ENCODE measurements at regions of chr10 and their contacts with region 1.

Region 1: DNA sequence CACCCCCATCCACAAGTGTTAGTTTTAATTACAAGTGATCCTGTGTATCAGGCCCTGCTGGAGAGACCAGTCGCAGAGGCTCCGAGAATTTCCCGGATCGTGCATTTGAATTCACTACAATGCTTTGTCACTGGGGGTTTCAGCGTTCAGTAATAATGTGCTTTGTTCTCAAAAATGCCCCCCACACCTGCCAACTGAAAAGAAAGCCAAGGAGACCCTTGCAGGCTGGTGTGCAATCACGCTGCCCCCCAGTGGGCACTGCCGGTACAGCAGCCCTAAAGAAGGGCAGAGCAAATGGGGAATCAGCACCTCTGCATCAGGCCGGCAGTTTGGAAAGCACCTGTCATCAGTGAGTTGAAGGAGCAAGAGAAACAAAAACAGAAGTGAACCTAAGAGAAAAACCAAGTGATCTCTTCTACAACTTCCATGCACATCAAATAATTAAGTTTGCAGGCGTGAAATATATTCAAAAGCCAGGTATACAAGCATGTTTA is 177.6 kb downstream of the PARD3 start:
- DNase-seq: peak; percentile 43

Region 2: DNA sequence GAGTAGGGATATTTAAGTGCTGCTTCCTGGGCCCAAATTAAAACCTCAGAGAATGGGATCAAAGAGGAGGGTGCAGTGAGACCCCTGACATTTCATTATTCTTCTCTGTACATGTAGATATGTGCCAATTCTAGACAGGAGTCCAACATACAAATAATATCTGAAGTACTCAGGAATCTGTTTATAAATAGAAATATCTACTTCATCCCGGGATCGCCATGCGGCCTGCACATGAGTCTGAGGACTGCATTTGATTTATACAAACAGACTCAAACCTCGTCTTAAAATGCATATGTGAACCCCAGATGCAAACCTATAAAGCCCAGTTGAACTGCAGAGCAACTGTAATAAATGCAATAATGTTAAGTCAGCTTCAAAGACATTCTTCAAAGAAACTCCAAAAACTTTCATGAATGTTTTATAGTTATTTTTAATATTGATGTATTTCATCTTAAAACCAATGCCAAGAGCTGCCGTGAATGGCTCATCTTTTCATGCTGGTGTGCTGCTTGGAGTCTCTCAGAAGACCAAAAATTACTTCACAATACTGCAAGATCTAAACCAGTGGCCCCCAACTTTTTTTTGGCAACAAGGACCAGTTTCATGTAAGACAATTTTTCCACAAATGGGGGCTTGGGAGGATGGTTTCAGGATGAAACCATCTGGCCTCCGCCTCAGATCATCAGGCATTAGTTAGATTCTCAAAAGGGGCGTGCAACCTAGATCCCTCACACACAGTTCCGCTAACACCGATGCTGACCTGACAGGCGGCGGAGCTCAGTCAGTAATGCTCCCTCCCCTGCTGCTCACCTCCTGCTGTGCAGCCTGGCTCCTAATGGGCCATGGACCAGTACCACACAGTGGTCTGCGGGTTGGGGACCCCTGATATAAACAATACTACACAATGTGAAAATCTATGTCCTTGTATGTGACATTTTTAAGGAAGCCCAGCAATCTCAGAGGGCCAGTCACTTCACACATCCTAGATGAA is 10.7 kb after region 1 on chr10:
- CTCF ChIA-PET with region 1: interaction called, 10 read pairs
- POLR2A ChIA-PET with region 1: no interaction called
- DNase-seq: no peak

Region 3: DNA sequence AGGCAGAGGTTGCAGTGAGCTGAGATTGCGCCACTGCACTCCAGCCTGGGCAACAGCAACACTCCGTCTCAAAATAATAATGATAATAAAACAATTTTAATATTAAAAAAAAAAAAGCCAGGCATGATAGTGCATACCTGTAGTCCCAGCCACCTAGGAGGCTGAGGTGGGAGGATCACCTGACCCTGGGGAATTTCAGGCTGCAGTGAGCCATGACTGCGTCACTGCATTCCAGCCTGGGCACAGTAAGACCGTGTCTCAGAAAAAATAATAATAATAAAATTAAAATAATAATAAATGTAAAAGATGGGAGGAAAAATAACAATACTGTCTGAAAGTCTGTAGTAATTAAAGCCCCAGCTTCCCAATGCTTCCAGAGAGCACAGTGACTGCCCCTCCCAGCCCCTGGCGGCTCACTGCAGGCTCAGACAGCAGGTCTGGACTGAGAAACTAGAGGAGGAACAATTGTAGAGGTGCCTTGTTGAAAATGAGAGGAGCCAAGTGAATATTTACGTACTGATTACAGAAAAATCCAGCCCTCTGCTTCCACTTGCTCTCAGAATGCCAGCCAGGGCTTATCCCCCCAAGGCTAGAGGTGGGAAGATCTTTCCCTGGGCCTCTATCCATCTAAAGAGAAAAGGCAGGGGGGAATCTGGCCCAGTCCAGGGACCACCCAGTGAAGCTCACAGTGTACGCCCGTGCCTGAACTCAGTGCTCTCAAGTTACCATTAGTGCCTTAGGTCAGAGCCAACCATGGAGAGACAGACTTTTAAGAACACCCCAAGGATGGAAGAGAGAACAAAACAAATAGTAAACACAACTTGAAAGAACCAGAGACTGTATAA is 64.8 kb after region 1 on chr10:
- CTCF ChIA-PET with region 1: no interaction called
- POLR2A ChIA-PET with region 1: no interaction called
- DNase-seq: no peak

Region 4: DNA sequence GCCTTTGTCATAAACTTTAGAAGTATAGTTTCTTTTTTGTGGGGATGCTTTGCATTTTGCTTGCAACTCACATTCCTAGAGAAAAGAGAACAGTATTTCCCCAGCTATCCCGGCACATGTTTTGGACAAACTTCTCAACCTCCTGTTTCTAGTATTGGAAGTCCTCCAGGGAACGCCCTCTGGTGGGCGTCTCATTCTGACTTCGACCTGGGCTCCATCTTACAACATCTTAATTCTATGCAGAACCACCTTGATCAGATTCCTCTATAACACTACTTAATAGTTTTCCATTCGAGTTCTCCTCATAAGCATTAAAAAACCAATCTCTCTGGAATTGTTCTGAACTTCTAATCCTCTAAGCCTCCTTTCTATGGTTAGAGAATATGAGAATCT is 1144.2 kb after region 1 on chr10:
- CTCF ChIA-PET with region 1: no interaction called
- POLR2A ChIA-PET with region 1: no interaction called
- DNase-seq: peak; percentile 31